Posterior vena cava (tissue), 2 donors: ENCODE measurements at regions of chr2 and their contacts with region 1.

Region 1: GRCh38 chr2:234278556-234279255 is 218.2 kb downstream of the ARL4C start:
- DNase-seq: no peak

Region 2: GRCh38 chr2:234249873-234250272 is 28.8 kb before region 1 on chr2:
- intact Hi-C with region 1: loop called in 1 of 2 experiments (anchors 2 kb)
- DNase-seq: no peak

Region 3: DNA sequence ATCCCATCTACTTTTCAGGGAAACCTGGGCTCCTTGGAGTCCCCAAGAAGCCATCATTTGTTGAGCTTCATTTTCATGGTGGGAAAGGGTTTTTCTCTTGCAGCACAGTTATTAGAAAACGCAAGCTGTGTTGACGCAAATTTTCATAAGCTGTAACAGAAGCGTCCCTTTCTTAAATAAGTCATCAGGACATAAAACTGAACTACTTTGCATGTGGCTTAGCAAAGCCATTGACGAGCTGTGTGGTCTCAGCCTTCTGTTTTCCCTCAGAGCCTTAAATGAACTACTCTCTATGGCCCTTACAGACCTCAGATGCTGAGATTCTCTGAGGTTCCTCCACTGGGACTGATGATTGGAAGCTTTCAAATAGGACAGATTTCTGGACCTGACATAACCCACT is 133.1 kb after region 1 on chr2:
- intact Hi-C with region 1: no loop called
- DNase-seq: no peak